ENCODE measurements at regions of chr3 and their contacts with region 1.

Region 1: DNA sequence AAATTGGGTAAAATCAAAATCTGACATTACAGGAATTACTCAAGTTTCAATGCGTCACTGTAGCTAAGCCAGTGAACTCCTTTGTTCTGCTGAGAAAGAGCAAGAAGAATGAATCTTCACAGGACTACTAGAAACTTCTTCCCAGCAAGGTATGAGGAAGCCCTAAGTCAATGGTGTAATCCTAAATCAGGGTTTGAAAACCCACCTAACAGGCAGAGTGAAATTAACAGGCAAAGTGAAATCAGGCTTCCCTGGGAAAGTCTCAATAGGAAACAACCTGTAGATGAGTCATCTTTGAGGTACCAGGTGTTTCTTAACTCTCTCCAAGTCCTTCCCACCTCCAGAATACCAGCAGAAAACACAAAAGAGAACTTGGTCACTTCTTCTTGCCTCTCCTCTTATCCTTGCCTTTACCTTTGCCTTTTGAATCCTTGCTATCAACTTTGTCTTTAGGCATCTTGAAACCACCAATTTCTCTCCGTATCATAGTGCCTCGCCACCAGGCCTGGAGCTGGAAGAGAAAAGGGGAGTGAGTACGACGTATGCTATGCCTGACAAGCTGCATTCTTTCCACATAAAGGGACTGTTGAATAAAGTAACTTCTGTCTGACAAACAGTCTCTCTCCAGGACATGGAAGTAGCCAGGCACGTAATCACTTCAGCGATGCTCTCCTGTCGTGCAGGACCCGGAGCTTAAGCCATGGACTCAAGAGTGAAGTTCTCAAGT is 60.6 kb upstream of the RPL35A start:
- DNase-seq: no peak
- ATAC-seq: peak; percentile 69
- H3K4me3 Mint-ChIP-seq: no peak overlapping the region
- H3K27ac Mint-ChIP-seq: peak overlapping the region; percentile 88
- H3K4me1 Mint-ChIP-seq: peaks cover 21% of the 10 kb centered on the region
- H3K27me3 Mint-ChIP-seq: no peaks in the 10 kb centered on the region
- CTCF ChIP-seq: no peak

Region 2: GRCh38 chr3:196454935-196455334 is 1434.4 kb before region 1 on chr3:
- CTCF ChIA-PET with region 1: no interaction called
- POLR2A ChIA-PET with region 1: interaction called, 10 read pairs
- DNase-seq: no peak
- ATAC-seq: no peak
- H3K4me3 Mint-ChIP-seq: no peak overlapping the region
- H3K27ac Mint-ChIP-seq: no peak overlapping the region
- H3K4me1 Mint-ChIP-seq: no peaks in the 10 kb centered on the region
- H3K27me3 Mint-ChIP-seq: no peaks in the 10 kb centered on the region
- CTCF ChIP-seq: no peak

Region 3: DNA sequence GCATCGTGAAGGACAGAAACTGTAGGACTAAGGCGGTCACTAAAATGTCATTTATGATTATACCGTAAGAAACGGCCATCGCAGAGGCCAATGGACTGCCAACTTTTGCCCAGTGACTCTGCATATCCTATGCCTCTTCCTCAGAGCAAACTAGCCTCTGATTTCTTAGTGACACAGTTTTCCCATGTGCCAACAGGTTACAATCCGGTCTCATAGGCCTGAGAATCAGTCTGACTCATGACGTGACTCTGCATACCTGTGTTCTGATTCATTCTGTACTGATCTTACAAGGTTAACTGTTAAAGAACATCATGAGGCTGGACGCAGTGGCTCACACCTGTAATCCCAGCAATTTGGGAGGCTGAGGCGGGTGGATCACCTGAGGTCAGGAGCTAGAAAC is 170.5 kb before region 1 on chr3:
- CTCF ChIA-PET with region 1: no interaction called
- POLR2A ChIA-PET with region 1: no interaction called
- DNase-seq: no peak
- ATAC-seq: no peak
- H3K4me3 Mint-ChIP-seq: no peak overlapping the region
- H3K27ac Mint-ChIP-seq: no peak overlapping the region
- H3K4me1 Mint-ChIP-seq: no peaks in the 10 kb centered on the region
- H3K27me3 Mint-ChIP-seq: no peaks in the 10 kb centered on the region
- CTCF ChIP-seq: no peak